Psoas muscle (tissue), 8 donors: ENCODE measurements at regions of chr7 and their contacts with region 1.

Region 1: GRCh38 chr7:141522657-141523342 is 28.4 kb upstream of the AGK start:
- DNase-seq: no peak
- ATAC-seq: no peak
- H3K4me3 ChIP-seq: no peak overlapping the region
- H3K27ac ChIP-seq: no peak overlapping the region
- H3K4me1 ChIP-seq: no peaks in the 10 kb centered on the region
- H3K27me3 ChIP-seq: no peaks in the 10 kb centered on the region
- CTCF ChIP-seq: no peak

Region 2: GRCh38 chr7:141320287-141320686 is 202.5 kb before region 1 on chr7:
- intact Hi-C with region 1: loop called in 1 of 2 experiments (anchors 10 kb)
- DNase-seq: no peak
- ATAC-seq: no peak
- H3K4me3 ChIP-seq: no peak overlapping the region
- H3K27ac ChIP-seq: no peak overlapping the region
- H3K4me1 ChIP-seq: no peaks in the 10 kb centered on the region
- H3K27me3 ChIP-seq: no peaks in the 10 kb centered on the region
- CTCF ChIP-seq: no peak